Activated CD4-positive, alpha-beta T cell treated with anti-CD3 and anti-CD28 coated beads, Interleukin-2, amount 10 ng/mL, durations not matched to agents 24 days and 14 days (primary cell): ENCODE measurements at regions of chr9 and their contacts with region 1.

Region 1: GRCh38 chr9:136410500-136411287 is at the starts of genes ENTR1 and PMPCA:
- DNase-seq: peak; percentile 99
- H3K4me3 Mint-ChIP-seq: peak within 1 kb of the TSS; percentile 94
- H3K27ac Mint-ChIP-seq: peak within 1 kb of the TSS; percentile 95
- H3K4me1 Mint-ChIP-seq: peaks cover 40% of the 10 kb centered on the region
- H3K27me3 Mint-ChIP-seq: no peaks in the 10 kb centered on the region
- total RNA-seq, gene ENTR1: 56.4 and 60.0 TPM in 2 replicates
- total RNA-seq, gene PMPCA: 114 and 124 TPM in 2 replicates

Region 2: DNA sequence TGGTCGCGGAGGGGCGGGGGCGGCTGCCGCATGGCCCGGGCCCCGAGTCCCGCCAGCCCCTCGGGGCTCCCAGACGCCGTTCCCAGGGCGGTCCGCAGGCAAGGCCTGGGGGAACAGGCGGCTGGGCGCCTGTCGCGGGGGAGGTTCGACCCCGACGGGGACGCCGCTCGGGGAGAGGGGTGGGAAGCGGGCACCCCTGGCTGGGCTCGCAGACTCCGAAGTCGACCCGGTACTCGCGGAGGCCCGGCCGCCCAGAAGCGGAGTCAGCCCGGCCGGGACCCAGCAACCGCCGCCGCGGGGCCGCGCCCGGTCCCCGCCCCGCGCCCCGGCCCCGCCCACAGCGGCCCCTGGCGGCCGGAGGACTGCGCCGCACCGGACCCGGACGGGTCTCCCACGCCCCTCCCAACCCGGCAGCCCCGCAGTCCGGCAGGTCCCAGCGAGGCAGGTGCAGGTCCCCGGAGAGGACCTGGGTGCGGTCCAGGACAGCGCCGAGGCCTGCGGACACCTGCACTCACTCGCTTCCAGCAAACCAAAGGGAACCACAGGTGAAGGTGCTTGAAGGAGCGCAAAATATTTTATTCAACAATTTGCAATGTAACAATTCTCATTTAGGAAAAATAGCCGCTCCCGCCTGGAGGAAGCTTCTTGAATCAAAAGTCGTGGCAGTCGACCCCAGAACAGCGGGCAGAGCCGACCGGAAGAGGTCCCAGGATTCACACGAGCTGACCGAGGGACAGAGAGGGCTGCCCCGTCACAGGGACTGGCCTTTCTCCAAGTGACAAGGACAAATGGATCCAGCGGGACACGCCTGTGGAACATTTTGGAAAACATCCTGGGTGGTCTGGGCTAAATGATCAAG is 29.1 kb after region 1 on chr9 and contains the start of gene INPP5E:
- intact Hi-C with region 1: loop called (anchors 2 kb)
- DNase-seq: peak; percentile 98
- H3K4me3 Mint-ChIP-seq: peak within 1 kb of the TSS; percentile 85
- H3K27ac Mint-ChIP-seq: no peak within 1 kb of the TSS
- H3K4me1 Mint-ChIP-seq: peaks cover 24% of the 10 kb centered on the region
- H3K27me3 Mint-ChIP-seq: no peaks in the 10 kb centered on the region
- total RNA-seq, gene INPP5E: 19.6 and 20.6 TPM in 2 replicates

Region 3: GRCh38 chr9:136455043-136456002 is 44.6 kb after region 1 on chr9:
- intact Hi-C with region 1: no loop called
- DNase-seq: no peak
- H3K4me3 Mint-ChIP-seq: no peak overlapping the region
- H3K27ac Mint-ChIP-seq: no peak overlapping the region
- H3K4me1 Mint-ChIP-seq: no peaks in the 10 kb centered on the region
- H3K27me3 Mint-ChIP-seq: no peaks in the 10 kb centered on the region